ENCODE measurements at regions of chr15 and their contacts with region 1.

Region 1: DNA sequence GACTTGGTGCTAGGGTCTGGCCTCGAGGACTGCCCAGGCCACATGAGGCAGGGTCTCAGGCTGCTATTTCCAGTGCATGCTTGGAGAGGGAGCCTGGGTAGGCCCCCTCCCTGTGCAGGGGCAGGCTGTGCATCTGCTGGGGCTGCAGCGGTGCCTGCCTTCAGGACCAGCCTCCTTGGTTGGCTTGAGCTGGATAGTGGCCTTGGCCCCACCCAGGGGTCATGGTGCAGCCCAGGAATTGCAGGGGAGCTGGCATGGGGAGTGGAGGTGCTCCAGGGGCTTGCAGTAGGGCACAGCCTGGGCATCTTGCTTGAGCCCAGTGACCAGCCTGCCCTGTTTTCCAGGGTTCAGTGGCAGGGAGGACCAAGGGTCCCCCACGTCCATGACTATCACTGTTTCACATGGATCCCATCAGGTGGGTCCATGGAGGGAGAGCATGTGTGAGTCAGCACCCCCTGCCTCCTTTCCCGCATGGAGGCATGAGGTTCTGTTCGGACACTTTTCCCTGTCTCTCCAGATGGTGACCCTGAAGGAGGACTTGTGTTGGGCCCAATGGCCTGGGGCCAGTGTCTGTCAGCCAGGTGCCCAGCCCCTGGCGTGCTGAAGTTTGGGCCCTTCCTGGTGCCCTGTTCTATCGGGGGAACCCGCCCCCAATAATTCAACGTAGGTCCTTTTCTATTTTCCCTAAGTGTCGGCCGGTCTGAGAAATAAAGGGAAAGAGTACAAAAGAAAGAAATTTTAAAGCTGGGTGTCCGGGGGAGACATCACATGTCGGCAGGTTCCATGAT is 218.6 kb downstream of the SNRPN start:
- DNase-seq: peak in 3 of 5 donors; percentile 2 to 36 (median 18)
- ATAC-seq: no peak
- H3K4me3 ChIP-seq: no peak overlapping the region
- H3K27ac ChIP-seq: no peak overlapping the region
- H3K4me1 ChIP-seq: no peaks in the 10 kb centered on the region
- H3K27me3 ChIP-seq: no peaks in the 10 kb centered on the region
- CTCF ChIP-seq: no peak
- POLR2A ChIP-seq: no peak

Region 2: GRCh38 chr15:25185736-25186135 is 12.3 kb after region 1 on chr15:
- intact Hi-C with region 1: loop called in 1 of 10 experiments (anchors 1 kb)
- DNase-seq: peak in 2 of 5 donors; percentile 11 to 21
- ATAC-seq: no peak
- H3K4me3 ChIP-seq: no peak overlapping the region
- H3K27ac ChIP-seq: no peak overlapping the region
- H3K4me1 ChIP-seq: no peaks in the 10 kb centered on the region
- H3K27me3 ChIP-seq: no peaks in the 10 kb centered on the region
- CTCF ChIP-seq: no peak
- POLR2A ChIP-seq: no peak

Region 3: DNA sequence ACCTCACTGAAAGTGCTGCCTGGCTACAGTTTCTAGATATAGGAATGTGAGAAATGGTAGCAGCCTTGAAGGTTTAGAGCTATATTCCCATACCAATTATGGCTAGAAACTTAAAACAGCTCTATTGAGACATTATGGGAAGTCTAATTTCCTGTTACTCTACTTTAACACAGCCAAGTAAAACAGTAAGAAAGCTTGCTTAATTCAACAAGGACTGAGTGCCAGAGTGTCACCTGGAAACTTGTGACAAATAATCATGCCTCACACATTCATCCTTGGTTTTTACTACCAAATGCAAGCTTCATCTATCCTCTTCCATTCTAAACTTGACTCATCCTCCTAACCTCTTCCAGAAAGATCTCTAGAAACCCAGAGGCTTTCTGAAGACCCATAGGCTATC is 223.7 kb after region 1 on chr15:
- intact Hi-C with region 1: no loop called
- DNase-seq: no peak
- ATAC-seq: peak in 2 of 4 donors; percentile 36 to 38
- H3K4me3 ChIP-seq: no peak overlapping the region
- H3K27ac ChIP-seq: peak overlapping the region in 1 of 12 donors; percentile 23
- H3K4me1 ChIP-seq: peaks cover 0 to 55% (median 11%) of the 10 kb centered on the region in 12 donors
- H3K27me3 ChIP-seq: no peaks in the 10 kb centered on the region
- CTCF ChIP-seq: no peak
- POLR2A ChIP-seq: no peak